CD8-positive, alpha-beta T cell (primary cell): ENCODE measurements at regions of chr14 and their contacts with region 1.

Region 1: DNA sequence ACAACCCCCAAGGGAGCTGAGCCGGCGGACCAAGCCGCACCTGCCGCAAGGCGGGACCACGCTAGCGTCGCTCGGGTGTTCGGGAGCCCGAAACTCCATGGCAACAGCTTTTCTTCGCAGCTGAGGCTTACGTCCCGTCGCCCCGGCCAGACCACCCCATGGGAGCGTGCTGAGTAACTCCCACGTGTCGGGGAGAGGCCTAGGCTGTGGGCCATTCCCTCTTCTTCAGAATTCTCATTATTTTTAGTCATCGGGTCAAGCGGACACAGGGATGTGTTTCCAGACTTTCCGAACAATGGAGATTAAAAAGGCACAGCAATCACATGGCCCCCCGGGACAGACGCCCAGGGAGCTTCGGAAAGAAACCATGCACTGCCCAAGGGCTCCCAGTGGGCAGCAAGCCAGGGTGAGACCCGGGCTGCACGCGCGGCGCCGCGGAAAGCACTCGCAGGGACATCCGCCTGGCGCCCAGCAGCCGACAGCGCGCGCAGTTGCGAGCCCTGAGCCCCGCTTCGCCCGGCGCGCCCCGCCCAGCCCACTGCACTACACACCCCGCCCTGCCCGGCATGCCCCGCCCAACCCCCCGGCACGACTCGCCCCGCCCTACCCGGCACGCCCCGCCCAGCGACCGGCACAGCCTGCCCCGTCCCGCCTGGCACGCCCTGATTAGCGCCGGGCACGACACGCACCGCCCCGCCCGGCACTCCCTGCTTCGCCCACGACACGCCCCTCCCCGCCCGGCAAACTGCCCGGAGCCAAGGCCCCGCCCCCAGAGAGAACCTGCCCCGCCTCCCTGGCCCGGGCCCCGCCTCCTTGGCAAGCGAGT is 422 bp upstream of the AK7 start:
- DNase-seq: peak; percentile 97 to 100 (median 100)
- ATAC-seq: peak; percentile 94
- H3K4me3 ChIP-seq: peak overlapping the region; percentile 92
- H3K4me3 Mint-ChIP-seq: peak overlapping the region; percentile 90
- H3K27ac ChIP-seq: peak overlapping the region; percentile 57 to 64
- H3K27ac Mint-ChIP-seq: peak overlapping the region; percentile 49
- H3K4me1 ChIP-seq: peaks cover 12% of the 10 kb centered on the region
- H3K4me1 Mint-ChIP-seq: peaks cover 12% of the 10 kb centered on the region
- H3K27me3 ChIP-seq: no peaks in the 10 kb centered on the region
- H3K27me3 Mint-ChIP-seq: no peaks in the 10 kb centered on the region
- CTCF ChIP-seq: no peak

Region 2: DNA sequence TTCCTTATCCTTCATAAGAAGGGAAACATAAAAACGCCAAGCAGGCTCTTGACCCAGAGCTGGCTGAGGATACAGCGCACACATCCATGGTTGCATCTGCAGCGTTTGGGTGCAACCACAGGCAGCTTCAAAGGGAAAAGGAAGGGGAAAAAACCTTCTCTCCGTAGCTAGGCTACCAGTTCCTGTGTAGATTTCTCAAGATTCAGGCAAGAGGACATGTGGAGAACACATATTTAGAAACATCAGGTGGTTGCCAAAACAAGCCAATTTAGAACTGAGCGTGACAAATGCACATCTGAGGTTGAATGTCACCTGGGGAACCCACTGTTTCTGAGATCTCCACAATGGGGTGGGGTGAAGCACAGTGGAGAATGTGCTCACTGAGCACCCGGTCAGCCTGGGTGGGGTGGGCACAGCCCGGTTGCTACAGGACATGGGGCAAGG is 265.1 kb before region 1 on chr14:
- CTCF ChIA-PET with region 1: no interaction called
- POLR2A ChIA-PET with region 1: no interaction called
- intact Hi-C with region 1: loop called in 1 of 2 experiments (anchors 1 kb)
- DNase-seq: peak in 8 of 9 experiments; percentile 10 to 85 (median 40)
- ATAC-seq: peak; percentile 87
- H3K4me3 ChIP-seq: no peak overlapping the region
- H3K4me3 Mint-ChIP-seq: peak overlapping the region; percentile 76
- H3K27ac ChIP-seq: peak overlapping the region; percentile 26 to 74
- H3K27ac Mint-ChIP-seq: peak overlapping the region; percentile 94
- H3K4me1 ChIP-seq: peaks cover 21% of the 10 kb centered on the region
- H3K4me1 Mint-ChIP-seq: peaks cover 29% of the 10 kb centered on the region
- H3K27me3 ChIP-seq: no peaks in the 10 kb centered on the region
- H3K27me3 Mint-ChIP-seq: peaks cover 8% of the 10 kb centered on the region
- CTCF ChIP-seq: no peak

Region 3: DNA sequence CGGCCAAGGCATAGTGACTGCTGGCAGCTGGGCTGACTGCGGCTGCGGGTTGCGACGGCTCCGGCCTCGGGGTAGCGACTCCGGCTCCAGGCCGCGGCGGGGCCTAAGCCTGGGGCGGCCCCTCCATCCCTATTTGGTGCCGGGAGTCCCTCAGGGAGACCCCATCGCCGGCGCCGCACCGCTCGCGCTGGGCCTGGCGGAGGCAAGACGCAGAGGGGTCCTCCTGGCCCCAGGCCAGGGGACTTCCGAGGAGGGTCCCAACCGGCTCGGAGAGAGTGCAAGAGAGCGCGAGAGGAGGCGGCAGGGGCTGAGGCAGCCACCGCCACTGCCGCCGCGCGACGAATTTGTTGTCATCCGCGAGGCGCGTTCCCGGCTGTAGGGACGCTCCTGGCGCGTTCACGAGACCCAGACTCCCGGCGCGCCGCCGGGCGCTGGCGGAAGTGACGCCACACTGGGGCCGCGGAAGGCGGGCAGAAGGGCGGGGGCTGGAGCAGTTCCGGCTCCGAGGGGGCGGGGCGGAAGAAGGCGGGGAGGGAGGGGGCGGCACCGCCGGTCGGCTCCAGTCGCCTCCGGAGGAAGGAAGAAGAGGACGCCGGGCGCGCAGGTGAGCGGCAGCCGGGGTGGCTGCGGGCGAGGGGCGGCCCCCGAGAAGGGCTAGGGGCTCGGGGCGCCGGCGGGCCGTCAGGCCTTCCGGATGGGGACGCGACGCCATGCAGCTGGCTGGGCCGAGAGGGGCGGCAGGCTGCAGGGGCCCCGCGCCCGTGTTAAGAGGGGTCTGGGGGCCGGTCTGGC is 28.3 kb before region 1 on chr14 and contains the starts of genes ATG2B and GSKIP:
- CTCF ChIA-PET with region 1: interaction called, 5 read pairs
- POLR2A ChIA-PET with region 1: interaction called, 4 read pairs
- intact Hi-C with region 1: loop called (anchors 1 kb)
- DNase-seq: peak; percentile 95 to 99 (median 98)
- ATAC-seq: peak; percentile 84
- H3K4me3 ChIP-seq: peak within 1 kb of the TSS; percentile 87 to 97
- H3K4me3 Mint-ChIP-seq: peak within 1 kb of the TSS; percentile 89
- H3K27ac ChIP-seq: peak within 1 kb of the TSS; percentile 89 to 93
- H3K27ac Mint-ChIP-seq: peak within 1 kb of the TSS; percentile 89
- H3K4me1 ChIP-seq: peaks cover 28% of the 10 kb centered on the region
- H3K4me1 Mint-ChIP-seq: peaks cover 59% of the 10 kb centered on the region
- H3K27me3 ChIP-seq: no peaks in the 10 kb centered on the region
- H3K27me3 Mint-ChIP-seq: no peaks in the 10 kb centered on the region
- CTCF ChIP-seq: no peak
- total RNA-seq, gene ATG2B: 16.0 to 17.9 TPM
- total RNA-seq, gene GSKIP: 9.4 to 13.5 TPM